ENCODE measurements at regions of chr15 and their contacts with region 1.

Region 1: GRCh38 chr15:74978503-74978902 is 16.9 kb upstream of the SCAMP5 start:
- DNase-seq: no peak
- H3K4me3 Mint-ChIP-seq: no peak overlapping the region
- H3K27ac Mint-ChIP-seq: no peak overlapping the region
- H3K4me1 Mint-ChIP-seq: peaks cover under 1% of the 10 kb centered on the region
- H3K27me3 Mint-ChIP-seq: peaks cover 12% of the 10 kb centered on the region
- CTCF ChIP-seq: no peak

Region 2: GRCh38 chr15:74995241-74995778 is 16.8 kb after region 1 on chr15 and contains the start of gene SCAMP5:
- CTCF ChIA-PET with region 1: no interaction called
- POLR2A ChIA-PET with region 1: interaction called, 10 read pairs
- intact Hi-C with region 1: no loop called
- DNase-seq: peak; percentile 91
- H3K4me3 Mint-ChIP-seq: peak within 1 kb of the TSS; percentile 67
- H3K27ac Mint-ChIP-seq: no peak within 1 kb of the TSS
- H3K4me1 Mint-ChIP-seq: peaks cover 11% of the 10 kb centered on the region
- H3K27me3 Mint-ChIP-seq: peaks cover 63% of the 10 kb centered on the region
- CTCF ChIP-seq: no peak
- total RNA-seq, gene SCAMP5: 0.54 and 0.96 TPM in 2 replicates

Region 3: GRCh38 chr15:75023181-75023871 is 44.8 kb after region 1 on chr15 and contains the start of gene PPCDC:
- CTCF ChIA-PET with region 1: no interaction called
- POLR2A ChIA-PET with region 1: no interaction called
- intact Hi-C with region 1: no loop called
- DNase-seq: peak; percentile 95
- H3K4me3 Mint-ChIP-seq: peak within 1 kb of the TSS; percentile 94
- H3K27ac Mint-ChIP-seq: peak within 1 kb of the TSS; percentile 95
- H3K4me1 Mint-ChIP-seq: no peaks in the 10 kb centered on the region
- H3K27me3 Mint-ChIP-seq: no peaks in the 10 kb centered on the region
- CTCF ChIP-seq: no peak
- total RNA-seq, gene PPCDC: 20.3 and 25.1 TPM in 2 replicates

Measured in MCF 10A (cell line).